Calu3 (cell line): ENCODE measurements at regions of chr9 and their contacts with region 1.

Region 1: GRCh38 chr9:2638871-2639673 is 17.5 kb downstream of the VLDLR start:
- DNase-seq: no peak
- H3K4me3 Mint-ChIP-seq: no peak overlapping the region
- H3K27ac Mint-ChIP-seq: no peak overlapping the region
- H3K4me1 Mint-ChIP-seq: no peaks in the 10 kb centered on the region
- H3K27me3 Mint-ChIP-seq: no peaks in the 10 kb centered on the region
- CTCF ChIP-seq: no peak

Region 2: GRCh38 chr9:982394-983230 is 1656.5 kb before region 1 on chr9:
- CTCF ChIA-PET with region 1: interaction called, 12 read pairs
- intact Hi-C with region 1: no loop called
- DNase-seq: no peak
- H3K4me3 Mint-ChIP-seq: no peak overlapping the region
- H3K27ac Mint-ChIP-seq: no peak overlapping the region
- H3K4me1 Mint-ChIP-seq: no peaks in the 10 kb centered on the region
- H3K27me3 Mint-ChIP-seq: peaks cover 64% of the 10 kb centered on the region
- CTCF ChIP-seq: no peak

Region 3: DNA sequence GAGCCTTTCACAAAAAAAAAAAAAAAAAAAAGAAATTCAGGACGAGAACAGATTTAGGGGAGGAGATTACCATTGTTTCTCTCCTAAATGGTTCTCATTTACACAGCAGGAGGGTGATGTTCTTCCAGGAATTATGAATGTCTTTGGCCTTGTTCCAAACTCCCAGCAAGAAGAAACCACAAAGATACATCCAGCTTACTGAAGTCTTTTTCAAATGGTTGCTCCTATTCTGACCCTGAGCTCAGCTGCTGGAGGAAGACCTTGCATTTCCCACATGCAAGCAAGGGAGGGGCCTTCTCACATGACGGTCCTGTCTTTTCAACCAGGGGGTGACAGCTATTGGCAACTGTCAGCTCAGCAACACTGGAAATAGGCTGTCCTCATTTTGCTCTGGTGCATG is 220.5 kb before region 1 on chr9:
- CTCF ChIA-PET with region 1: no interaction called
- intact Hi-C with region 1: no loop called
- DNase-seq: no peak
- H3K4me3 Mint-ChIP-seq: no peak overlapping the region
- H3K27ac Mint-ChIP-seq: no peak overlapping the region
- H3K4me1 Mint-ChIP-seq: no peaks in the 10 kb centered on the region
- H3K27me3 Mint-ChIP-seq: no peaks in the 10 kb centered on the region
- CTCF ChIP-seq: no peak